Heart left ventricle (tissue), 16 donors: ENCODE measurements at regions of chr22 and their contacts with region 1.

Region 1: GRCh38 chr22:31080848-31081649 is at the start of gene SMTN:
- DNase-seq: peak; percentile 94 to 97 (median 94)
- ATAC-seq: peak; percentile 70 to 87 (median 84)
- H3K4me3 ChIP-seq: peak within 1 kb of the TSS; percentile 70 to 100 (median 78)
- H3K27ac ChIP-seq: peak within 1 kb of the TSS; percentile 80 to 99 (median 94)
- H3K4me1 ChIP-seq: peaks cover 1 to 49% (median 37%) of the 10 kb centered on the region in 12 donors
- H3K27me3 ChIP-seq: no peaks in the 10 kb centered on the region
- CTCF ChIP-seq: no peak
- POLR2A ChIP-seq: peak; percentile 88 to 99
- total RNA-seq, gene SMTN: 114 to 270 (median 167) TPM

Region 2: GRCh38 chr22:30777587-30777986 is 303.5 kb before region 1 on chr22:
- intact Hi-C with region 1: no loop called
- DNase-seq: no peak
- ATAC-seq: no peak
- H3K4me3 ChIP-seq: no peak overlapping the region
- H3K27ac ChIP-seq: no peak overlapping the region
- H3K4me1 ChIP-seq: peaks cover 0 to 5% (median 0%) of the 10 kb centered on the region in 12 donors
- H3K27me3 ChIP-seq: no peaks in the 10 kb centered on the region
- CTCF ChIP-seq: no peak
- POLR2A ChIP-seq: no peak

Region 3: DNA sequence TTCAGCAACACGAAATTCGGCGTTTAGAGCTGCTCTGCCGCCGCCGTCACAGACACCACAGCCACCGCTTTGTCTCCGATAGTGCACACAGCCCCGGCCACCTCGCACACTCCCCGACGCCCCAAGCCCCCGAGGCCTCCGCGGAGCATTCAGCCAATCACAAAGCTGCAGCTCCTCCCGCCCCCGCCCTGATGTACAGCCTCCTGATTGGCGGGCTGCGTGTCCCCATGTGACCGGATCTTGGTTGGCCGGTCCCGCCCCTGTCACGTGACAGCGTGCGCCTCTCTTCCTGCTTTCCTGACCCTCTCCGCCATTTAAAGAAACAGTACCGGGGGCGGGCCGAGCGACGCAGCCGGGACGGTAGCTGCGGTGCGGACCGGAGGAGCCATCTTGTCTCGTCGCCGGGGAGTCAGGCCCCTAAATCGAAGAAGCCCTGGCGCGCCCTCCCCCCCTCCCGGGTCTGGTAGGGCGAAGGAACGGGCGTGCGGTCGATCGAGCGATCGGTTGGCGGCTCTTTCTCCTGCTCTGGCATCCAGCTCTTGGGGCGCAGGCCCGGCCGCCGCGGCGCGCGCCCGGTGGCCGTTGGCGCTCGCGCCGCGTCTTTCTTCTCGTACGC is 112.0 kb before region 1 on chr22 and contains the start of gene TUG1:
- intact Hi-C with region 1: loop called (anchors 1 to 5 kb)
- DNase-seq: peak; percentile 99
- ATAC-seq: peak; percentile 97 to 99 (median 98)
- H3K4me3 ChIP-seq: peak within 1 kb of the TSS; percentile 53 to 94 (median 84)
- H3K27ac ChIP-seq: peak within 1 kb of the TSS; percentile 89 to 99 (median 96)
- H3K4me1 ChIP-seq: peaks cover 0 to 61% (median 34%) of the 10 kb centered on the region in 12 donors
- H3K27me3 ChIP-seq: no peaks in the 10 kb centered on the region
- CTCF ChIP-seq: no peak
- POLR2A ChIP-seq: peak; percentile 72 to 92
- total RNA-seq, gene TUG1: 32.8 to 48.9 (median 43.3) TPM

Region 4: DNA sequence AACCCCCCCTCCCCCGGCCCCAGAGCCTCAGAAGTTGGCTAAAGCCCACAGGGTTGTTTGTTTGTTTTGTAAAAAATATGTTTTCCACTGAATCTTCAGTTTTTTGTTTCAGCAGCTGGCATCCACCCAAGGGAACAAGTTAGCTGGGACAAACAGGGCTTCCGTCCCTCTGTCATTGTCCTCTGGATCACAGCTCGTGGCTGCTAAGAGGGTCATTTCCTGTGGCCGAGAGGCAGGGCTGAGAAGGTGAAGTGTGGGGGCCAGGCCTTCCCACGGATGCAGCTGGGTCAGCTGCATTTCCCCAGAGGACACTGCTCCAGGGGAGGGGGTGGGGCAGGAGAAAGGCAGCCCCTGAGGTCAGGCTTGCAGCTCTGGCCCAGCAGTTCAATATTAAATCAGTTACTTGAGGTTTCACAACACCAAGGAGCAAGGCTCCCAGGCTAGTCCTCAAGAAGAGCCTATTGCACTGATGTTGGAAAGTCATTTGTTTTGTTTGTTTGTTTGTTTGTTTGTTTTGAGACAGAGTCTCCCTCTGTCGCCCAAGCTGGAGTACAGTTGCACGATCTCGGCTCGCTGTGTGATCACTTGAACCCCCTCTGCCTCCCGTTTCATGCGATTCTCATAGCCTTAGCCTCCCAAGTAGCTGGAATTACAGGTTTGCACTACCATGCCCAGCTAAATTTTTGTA is 34.4 kb before region 1 on chr22:
- intact Hi-C with region 1: loop called in 9 of 10 experiments (anchors 2 to 5 kb)
- DNase-seq: peak; percentile 87 to 91 (median 87)
- ATAC-seq: peak; percentile 83 to 95 (median 90)
- H3K4me3 ChIP-seq: no peak overlapping the region
- H3K27ac ChIP-seq: peak overlapping the region; percentile 49 to 92 (median 86)
- H3K4me1 ChIP-seq: peaks cover 5 to 80% (median 49%) of the 10 kb centered on the region in 12 donors
- H3K27me3 ChIP-seq: no peaks in the 10 kb centered on the region
- CTCF ChIP-seq: no peak
- POLR2A ChIP-seq: no peak

Region 5: GRCh38 chr22:31148953-31149627 is 68.0 kb after region 1 on chr22:
- intact Hi-C with region 1: loop called in 2 of 10 experiments (anchors 5 kb)
- DNase-seq: peak; percentile 74 to 79 (median 76)
- ATAC-seq: peak; percentile 91 to 97 (median 96)
- H3K4me3 ChIP-seq: no peak overlapping the region
- H3K27ac ChIP-seq: peak overlapping the region; percentile 37 to 85 (median 74)
- H3K4me1 ChIP-seq: peaks cover 0 to 14% (median 10%) of the 10 kb centered on the region in 12 donors
- H3K27me3 ChIP-seq: no peaks in the 10 kb centered on the region
- CTCF ChIP-seq: peak; percentile 81 to 98 (median 94)
- POLR2A ChIP-seq: no peak

Region 6: DNA sequence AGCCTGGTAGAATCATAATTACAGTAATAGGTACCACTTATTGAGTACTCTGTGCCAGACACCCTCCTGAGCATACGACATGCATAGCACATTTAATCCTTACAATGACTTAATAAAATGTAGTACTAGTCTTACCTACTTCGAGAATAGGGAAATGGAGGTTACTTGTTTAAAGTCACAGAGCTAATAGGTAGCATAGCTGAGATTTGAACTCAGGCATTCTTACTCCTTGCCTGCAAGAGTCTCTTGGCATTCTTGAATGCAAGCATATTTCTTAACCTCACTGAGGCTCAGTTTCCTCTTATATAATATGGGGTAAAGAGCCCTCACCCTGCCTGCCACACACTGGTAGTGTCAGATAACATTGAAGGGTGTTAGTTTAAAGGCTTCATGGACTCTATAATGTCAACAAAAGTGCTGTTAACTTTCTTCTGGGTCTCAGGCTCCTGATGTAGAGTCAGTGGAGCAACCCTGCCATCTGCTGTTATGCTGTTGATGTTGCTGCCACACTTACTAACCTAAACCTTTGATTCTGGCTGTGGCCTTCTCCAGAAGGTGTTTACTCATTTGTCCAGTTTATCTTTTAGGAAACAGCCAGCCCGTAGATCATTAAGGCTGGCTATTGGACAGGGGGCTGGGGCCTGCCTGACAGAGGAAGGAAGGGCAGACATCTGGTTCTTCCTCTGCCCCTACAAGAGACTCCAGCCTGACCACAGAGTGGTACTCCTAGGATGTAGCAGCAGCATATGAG is 150.0 kb after region 1 on chr22:
- intact Hi-C with region 1: loop called in 1 of 10 experiments (anchors 5 kb)
- DNase-seq: peak in 2 of 5 donors; percentile 46
- ATAC-seq: peak; percentile 73 to 77 (median 76)
- H3K4me3 ChIP-seq: no peak overlapping the region
- H3K27ac ChIP-seq: peak overlapping the region in 11 of 12 donors; percentile 61 to 95 (median 70)
- H3K4me1 ChIP-seq: peaks cover 5 to 80% (median 35%) of the 10 kb centered on the region in 12 donors
- H3K27me3 ChIP-seq: no peaks in the 10 kb centered on the region
- CTCF ChIP-seq: peak; percentile 53 to 82 (median 68)
- POLR2A ChIP-seq: no peak

Region 7: GRCh38 chr22:31286360-31287255 is 205.6 kb after region 1 on chr22:
- intact Hi-C with region 1: no loop called
- DNase-seq: no peak
- ATAC-seq: no peak
- H3K4me3 ChIP-seq: no peak overlapping the region
- H3K27ac ChIP-seq: peak overlapping the region in 5 of 12 donors; percentile 0 to 96 (median 22)
- H3K4me1 ChIP-seq: peaks cover 3 to 76% (median 34%) of the 10 kb centered on the region in 12 donors
- H3K27me3 ChIP-seq: no peaks in the 10 kb centered on the region
- CTCF ChIP-seq: no peak
- POLR2A ChIP-seq: no peak